Astrocyte of the cerebellum (primary cell): ENCODE measurements at regions of chr15 and their contacts with region 1.

Region 1: DNA sequence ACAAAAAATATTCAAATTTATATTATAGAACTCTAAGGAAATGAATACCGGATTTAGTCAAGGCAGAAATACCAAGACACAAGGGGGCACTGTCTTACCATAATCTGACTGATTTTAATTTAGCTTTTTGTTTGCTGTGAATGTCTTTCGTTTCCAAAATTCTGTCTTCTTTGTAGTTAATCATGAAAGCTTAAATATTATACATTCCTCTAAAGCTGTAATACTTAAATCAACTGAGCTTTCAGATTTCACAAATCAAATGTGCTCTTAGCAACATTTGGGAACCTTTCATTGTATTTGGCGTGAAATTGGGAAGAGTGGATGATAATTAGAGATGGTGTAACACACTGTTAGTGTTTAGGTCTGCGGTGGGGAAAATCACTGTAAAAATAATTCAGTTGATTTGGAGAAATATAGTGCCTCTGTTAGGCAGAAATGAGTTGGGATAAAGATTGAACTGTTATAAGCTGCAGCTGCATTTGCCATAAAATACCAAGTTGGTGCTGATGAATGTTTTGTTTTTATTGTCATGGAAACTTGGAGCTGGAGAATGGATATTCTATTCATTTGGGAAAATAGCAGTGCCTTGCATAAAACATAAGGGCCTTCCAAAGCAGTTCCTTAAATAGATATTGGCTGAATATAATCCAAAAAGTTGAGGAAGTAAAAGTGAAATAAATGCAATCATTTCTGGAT is 228.2 kb downstream of the TCF12 start:
- DNase-seq: peak; percentile 66
- H3K4me3 ChIP-seq: no peak overlapping the region
- CTCF ChIP-seq: peak; percentile 47

Region 2: GRCh38 chr15:56491110-56491722 is 655.4 kb before region 1 on chr15:
- in situ Hi-C with region 1: loop called (anchors 10 kb)
- DNase-seq: peak; percentile 74
- H3K4me3 ChIP-seq: no peak overlapping the region
- CTCF ChIP-seq: peak; percentile 99

Region 3: GRCh38 chr15:57213862-57214261 is 67.2 kb after region 1 on chr15:
- in situ Hi-C with region 1: loop called (anchors 5 kb)
- DNase-seq: no peak
- H3K4me3 ChIP-seq: no peak overlapping the region
- CTCF ChIP-seq: peak; percentile 51

Region 4: DNA sequence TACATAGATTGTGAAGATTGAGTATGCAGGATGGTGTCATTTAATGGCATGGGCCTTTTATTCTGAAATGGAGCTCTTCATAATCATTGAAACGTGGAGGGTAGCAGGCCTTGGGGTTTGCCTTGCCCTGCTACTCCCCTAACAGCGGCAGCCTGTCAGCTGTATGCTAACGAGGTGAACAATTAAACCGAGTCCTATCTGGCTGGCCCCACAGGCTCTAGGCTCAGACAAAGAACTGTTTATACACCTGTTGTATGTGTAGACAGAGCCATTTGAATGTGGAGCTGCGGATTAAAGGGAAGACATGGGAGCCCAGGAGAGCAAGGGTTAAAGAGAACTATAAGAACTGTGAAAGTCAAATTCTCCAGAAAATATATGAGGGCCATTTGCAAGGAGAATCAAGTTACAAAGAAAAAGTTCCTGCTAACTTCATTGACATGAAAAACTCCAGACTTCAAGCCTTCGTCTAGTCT is 113.0 kb after region 1 on chr15:
- in situ Hi-C with region 1: no loop called
- DNase-seq: no peak
- H3K4me3 ChIP-seq: no peak overlapping the region
- CTCF ChIP-seq: no peak